ENCODE measurements at regions of chr15 and their contacts with region 1.

Region 1: DNA sequence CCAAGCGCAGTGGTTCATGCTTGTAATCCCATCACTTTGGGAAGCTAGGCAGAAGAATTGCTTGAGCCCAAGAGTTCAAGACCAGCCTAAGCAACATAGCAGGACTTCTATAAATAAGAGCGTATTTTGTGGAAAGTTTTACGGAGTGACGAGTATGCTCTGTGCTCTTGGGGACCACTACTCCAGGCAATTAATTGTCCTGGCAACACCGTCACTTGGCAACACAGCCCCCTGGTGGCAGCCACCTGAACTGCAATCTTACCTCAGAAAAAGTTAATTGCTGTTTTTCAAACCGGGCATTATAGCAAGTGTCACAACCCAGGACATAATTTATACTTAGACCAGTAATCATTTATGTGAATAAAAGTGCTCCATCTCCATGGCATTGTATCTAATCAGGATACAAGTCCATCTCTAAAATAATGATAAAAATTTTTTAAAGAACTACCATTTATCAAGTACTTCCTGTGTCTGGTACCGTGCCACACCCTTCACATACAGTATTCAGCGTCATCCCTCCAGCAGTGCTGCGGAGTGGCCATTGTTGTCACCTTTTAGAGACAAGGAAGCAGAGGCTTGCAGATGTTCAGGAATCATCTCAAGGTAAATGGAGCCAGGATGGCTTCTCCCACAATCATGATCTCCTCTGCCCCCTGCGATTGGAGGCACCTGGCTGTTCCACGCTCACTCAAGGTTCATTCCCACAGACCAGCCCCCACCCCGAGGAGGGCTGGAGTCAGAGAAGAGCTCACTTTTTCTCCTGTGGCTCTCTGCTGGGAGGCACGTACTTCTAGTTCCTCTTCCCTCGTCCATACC is 34.5 kb downstream of the PLA2G4D start:
- DNase-seq: peak in 1 of 2 donors; percentile 30
- H3K4me3 ChIP-seq: no peak overlapping the region
- H3K27ac ChIP-seq: no peak overlapping the region
- H3K4me1 ChIP-seq: no peaks in the 10 kb centered on the region
- H3K27me3 ChIP-seq: no peaks in the 10 kb centered on the region
- CTCF ChIP-seq: peak; percentile 84 to 88 (median 87)
- POLR2A ChIP-seq: no peak

Region 2: GRCh38 chr15:41180206-41180789 is 879.6 kb before region 1 on chr15:
- intact Hi-C with region 1: no loop called
- DNase-seq: no peak
- H3K4me3 ChIP-seq: no peak overlapping the region
- H3K27ac ChIP-seq: no peak overlapping the region
- H3K4me1 ChIP-seq: no peaks in the 10 kb centered on the region
- H3K27me3 ChIP-seq: no peaks in the 10 kb centered on the region
- CTCF ChIP-seq: no peak
- POLR2A ChIP-seq: no peak

Region 3: DNA sequence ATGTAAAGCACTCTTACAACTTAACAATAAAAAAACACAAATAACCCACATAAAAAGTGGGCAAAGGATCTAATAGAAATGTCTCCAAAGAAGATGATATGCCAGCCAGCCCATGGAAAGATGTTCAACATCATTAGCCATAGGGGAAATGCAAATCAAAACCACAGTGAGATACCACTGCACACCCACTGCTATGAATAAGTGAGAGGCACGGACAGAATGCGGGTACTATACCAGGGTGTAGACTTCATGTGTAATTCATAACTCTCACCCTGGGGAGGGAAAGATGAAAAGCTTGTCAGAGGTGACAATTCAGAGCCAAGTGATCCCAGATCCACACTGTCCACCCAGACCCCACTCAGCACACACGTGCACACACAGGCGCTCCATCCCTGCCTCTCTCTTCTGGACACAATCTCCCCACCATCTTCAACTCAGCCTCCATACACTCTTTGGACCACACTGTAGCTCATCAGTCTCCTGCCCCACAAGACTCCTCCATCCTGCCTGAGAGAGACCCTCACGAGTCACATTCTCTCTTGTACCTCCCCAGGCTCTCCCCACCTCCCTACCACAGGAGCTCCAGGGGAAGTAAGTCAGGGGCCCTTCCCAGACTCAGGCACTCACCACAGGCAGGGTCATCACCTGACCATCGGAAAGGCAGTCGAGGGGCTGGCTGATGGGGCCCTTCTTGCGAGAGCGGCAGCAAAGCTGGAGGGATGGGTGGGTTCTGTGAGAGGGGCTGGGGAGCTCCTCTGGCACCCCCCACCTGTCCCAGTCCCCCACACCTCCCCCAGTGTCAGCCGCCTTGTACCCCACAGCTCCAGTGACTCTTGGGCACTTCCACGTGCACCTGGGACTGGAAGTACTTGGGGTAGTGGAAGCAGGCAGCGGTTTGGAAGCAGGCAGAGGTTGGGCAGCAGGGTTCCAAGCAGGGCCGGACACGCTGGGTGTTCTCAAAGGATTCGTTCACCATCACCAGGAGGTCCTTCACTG is 60.3 kb before region 1 on chr15:
- intact Hi-C with region 1: loop called (anchors 5 kb)
- DNase-seq: no peak
- H3K4me3 ChIP-seq: no peak overlapping the region
- H3K27ac ChIP-seq: no peak overlapping the region
- H3K4me1 ChIP-seq: no peaks in the 10 kb centered on the region
- H3K27me3 ChIP-seq: no peaks in the 10 kb centered on the region
- CTCF ChIP-seq: no peak
- POLR2A ChIP-seq: no peak

Region 4: DNA sequence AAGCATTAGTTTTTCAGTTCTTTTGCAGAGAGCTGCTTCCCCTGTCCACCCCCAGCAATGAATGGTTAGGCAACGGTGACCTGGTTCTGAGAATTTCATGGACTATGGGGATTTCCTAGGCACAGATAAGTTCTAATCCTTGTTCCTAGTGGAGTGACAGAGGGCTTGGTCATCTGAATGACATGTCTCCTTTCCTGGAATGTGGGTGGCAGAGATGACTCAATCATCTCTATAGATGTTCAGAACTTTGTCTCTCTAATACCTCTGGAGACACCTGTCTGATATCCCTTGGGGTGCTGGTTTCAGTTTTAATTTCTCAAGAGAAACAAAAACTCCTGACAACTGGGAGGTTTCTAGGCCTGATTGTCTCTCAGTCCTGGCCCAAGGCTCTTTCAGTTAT is 49.4 kb before region 1 on chr15:
- intact Hi-C with region 1: no loop called
- DNase-seq: no peak
- H3K4me3 ChIP-seq: no peak overlapping the region
- H3K27ac ChIP-seq: no peak overlapping the region
- H3K4me1 ChIP-seq: no peaks in the 10 kb centered on the region
- H3K27me3 ChIP-seq: no peaks in the 10 kb centered on the region
- CTCF ChIP-seq: no peak
- POLR2A ChIP-seq: no peak

Region 5: DNA sequence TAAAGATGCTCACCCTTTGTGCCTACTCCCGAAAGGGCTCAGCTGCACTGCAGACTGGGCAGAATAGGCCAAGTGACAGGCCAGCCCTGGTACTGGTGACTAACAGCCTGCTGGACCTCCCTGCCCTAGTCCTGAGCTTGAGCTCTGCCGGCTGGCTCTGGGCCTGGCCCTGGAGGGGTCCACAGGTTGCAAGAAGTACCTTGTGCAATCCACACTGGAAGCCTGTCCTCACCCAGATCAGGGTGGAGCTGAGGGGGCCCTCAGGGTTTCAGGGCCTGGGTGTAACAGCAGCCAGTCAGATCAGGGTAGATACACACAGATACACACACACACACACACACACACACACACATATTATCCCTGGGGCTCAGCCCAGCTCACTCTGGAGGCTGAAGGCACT is 61.8 kb after region 1 on chr15:
- intact Hi-C with region 1: no loop called
- DNase-seq: peak in 1 of 2 donors; percentile 63
- H3K4me3 ChIP-seq: no peak overlapping the region
- H3K27ac ChIP-seq: no peak overlapping the region
- H3K4me1 ChIP-seq: no peaks in the 10 kb centered on the region
- H3K27me3 ChIP-seq: no peaks in the 10 kb centered on the region
- CTCF ChIP-seq: no peak
- POLR2A ChIP-seq: no peak

Measured in breast epithelium (tissue), 4 donors.